Activated B cell treated with CpG ODN at 0.5 μM for 24 hours (primary cell): ENCODE measurements at regions of chr1 and their contacts with region 1.

Region 1: DNA sequence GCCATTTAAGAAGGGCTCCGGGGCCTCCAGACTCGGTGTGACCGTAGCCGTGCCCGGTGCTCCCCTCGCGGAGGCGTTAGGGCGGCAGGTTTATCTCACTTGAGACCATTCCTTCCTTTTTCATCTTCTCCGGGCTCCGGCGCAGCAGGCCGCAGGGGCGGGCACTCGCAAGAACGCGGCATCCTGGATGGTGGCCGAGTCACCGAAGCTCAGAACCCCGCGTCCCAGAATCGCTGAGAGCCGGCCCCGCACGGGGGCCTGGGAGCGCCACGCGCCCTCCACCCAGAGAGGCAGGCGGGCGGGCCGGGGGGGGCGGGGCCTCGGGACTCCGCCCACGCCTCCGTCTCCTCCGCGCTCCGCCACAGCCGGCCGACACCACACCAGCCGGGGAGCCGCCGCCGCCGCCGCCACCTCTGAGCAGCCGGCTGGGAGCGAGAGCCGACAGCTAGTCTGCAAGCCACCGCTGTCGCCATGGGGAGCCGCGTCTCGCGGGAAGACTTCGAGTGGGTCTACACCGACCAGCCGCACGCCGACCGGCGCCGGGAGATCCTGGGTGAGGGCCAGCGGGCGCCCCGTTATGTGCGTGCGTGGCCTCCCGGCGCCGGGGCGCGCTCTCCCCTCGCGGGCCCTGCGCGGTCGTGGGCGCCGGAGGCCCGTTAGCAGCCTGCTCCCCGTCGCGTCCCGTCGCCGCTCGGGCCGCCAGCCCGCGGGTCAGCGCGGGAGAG is at the start of gene DEGS1:
- DNase-seq: peak; percentile 83
- ATAC-seq: peak; percentile 80
- H3K4me3 Mint-ChIP-seq: peak within 1 kb of the TSS; percentile 90
- H3K27ac Mint-ChIP-seq: peak within 1 kb of the TSS; percentile 91
- H3K4me1 Mint-ChIP-seq: peaks cover 58% of the 10 kb centered on the region
- H3K27me3 Mint-ChIP-seq: no peaks in the 10 kb centered on the region
- CTCF ChIP-seq: no peak
- total RNA-seq, gene DEGS1: 55.5 and 55.9 TPM in 2 replicates

Region 2: DNA sequence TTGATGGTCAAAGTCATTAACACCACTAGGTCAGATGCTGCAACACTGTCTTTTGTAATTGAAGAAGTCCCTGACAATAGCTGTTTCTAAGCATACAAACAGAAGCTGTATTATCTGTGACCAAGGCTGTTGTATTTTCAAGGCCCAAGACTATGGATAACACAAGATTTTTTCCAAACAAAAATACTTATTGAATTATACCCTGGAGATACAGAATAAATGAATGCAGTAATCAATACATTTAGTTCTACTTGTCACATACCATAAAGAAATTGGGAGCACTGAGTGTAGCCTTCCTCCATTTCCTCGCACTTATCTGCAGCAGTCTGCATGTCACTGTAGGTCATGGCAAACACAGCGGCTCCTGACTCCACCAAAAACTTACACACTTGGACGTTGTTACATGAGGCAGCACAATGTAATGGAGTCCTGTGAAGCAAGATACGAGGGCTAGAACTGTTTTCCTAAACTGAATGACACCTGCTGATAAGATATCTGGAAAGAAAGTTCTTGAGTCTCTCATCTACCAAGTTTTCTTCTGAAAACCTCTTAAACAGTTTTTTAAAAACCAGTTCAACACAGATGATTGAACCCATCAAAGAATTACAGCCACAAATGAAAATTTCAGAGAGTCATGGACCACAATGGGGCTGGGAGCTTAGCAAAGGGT is 394.1 kb before region 1 on chr1:
- CTCF ChIA-PET with region 1: no interaction called
- POLR2A ChIA-PET with region 1: no interaction called
- intact Hi-C with region 1: no loop called
- DNase-seq: no peak
- ATAC-seq: no peak
- H3K4me3 Mint-ChIP-seq: no peak overlapping the region
- H3K27ac Mint-ChIP-seq: no peak overlapping the region
- H3K4me1 Mint-ChIP-seq: no peaks in the 10 kb centered on the region
- H3K27me3 Mint-ChIP-seq: no peaks in the 10 kb centered on the region
- CTCF ChIP-seq: no peak

Region 3: DNA sequence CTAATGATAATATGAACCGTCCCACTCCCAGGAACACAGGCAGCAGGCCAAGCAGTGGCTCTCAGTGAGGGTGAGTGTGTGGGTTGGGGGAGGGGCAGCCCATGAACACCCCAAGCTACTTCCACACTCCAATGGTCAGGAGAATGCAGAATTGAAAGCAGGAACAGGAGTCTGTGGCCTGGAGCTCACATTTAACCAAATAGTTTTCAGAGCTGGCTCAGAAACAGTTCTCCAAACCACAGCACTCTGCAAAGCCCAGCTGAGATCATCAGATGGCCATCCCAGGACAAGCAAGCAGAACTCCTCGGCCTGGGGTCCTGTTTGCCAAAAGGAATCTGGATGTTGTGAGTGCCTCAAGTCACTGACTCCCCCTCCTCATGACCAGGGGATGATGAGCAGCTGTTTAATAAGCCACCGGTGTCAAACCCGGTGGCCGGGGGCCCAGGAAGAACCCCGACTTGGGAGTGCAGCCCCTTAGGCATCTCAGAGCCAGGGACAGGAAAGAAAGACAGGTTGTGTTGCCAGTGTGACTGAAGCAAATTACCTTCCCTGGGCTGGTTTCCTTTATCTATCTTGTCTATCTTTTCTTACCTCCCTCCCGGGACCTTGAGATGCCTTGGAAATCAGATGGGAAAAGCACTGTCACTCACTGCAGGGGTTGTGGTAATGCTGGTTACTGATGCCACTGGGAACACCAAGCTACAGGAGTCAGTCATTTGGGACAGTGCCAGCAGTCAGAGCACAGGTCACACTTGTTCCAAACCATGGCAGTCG is 20.4 kb after region 1 on chr1:
- CTCF ChIA-PET with region 1: no interaction called
- POLR2A ChIA-PET with region 1: interaction called, 44 read pairs
- intact Hi-C with region 1: loop called (anchors 1 kb)
- DNase-seq: peak; percentile 45
- ATAC-seq: peak; percentile 82
- H3K4me3 Mint-ChIP-seq: peak overlapping the region; percentile 72
- H3K27ac Mint-ChIP-seq: peak overlapping the region; percentile 74
- H3K4me1 Mint-ChIP-seq: peaks cover 34% of the 10 kb centered on the region
- H3K27me3 Mint-ChIP-seq: no peaks in the 10 kb centered on the region
- CTCF ChIP-seq: no peak

Region 4: GRCh38 chr1:224245188-224245587 is 62.2 kb after region 1 on chr1:
- CTCF ChIA-PET with region 1: interaction called, 4 read pairs
- POLR2A ChIA-PET with region 1: interaction called, 14 read pairs
- intact Hi-C with region 1: loop called (anchors 5 kb)
- DNase-seq: peak; percentile 17
- ATAC-seq: peak; percentile 97
- H3K4me3 Mint-ChIP-seq: peak overlapping the region; percentile 44
- H3K27ac Mint-ChIP-seq: peak overlapping the region; percentile 90
- H3K4me1 Mint-ChIP-seq: peaks cover 28% of the 10 kb centered on the region
- H3K27me3 Mint-ChIP-seq: no peaks in the 10 kb centered on the region
- CTCF ChIP-seq: no peak

Region 5: GRCh38 chr1:224434691-224435317 is 251.8 kb after region 1 on chr1 and contains the start of gene WDR26:
- CTCF ChIA-PET with region 1: no interaction called
- POLR2A ChIA-PET with region 1: no interaction called
- intact Hi-C with region 1: loop called (anchors 5 kb)
- DNase-seq: peak; percentile 74
- ATAC-seq: peak; percentile 85
- H3K4me3 Mint-ChIP-seq: peak within 1 kb of the TSS; percentile 96
- H3K27ac Mint-ChIP-seq: peak within 1 kb of the TSS; percentile 97
- H3K4me1 Mint-ChIP-seq: peaks cover 47% of the 10 kb centered on the region
- H3K27me3 Mint-ChIP-seq: no peaks in the 10 kb centered on the region
- CTCF ChIP-seq: no peak
- total RNA-seq, gene WDR26: 75.3 and 91.3 TPM in 2 replicates